ENCODE measurements at regions of chr1 and their contacts with region 1.

Region 1: DNA sequence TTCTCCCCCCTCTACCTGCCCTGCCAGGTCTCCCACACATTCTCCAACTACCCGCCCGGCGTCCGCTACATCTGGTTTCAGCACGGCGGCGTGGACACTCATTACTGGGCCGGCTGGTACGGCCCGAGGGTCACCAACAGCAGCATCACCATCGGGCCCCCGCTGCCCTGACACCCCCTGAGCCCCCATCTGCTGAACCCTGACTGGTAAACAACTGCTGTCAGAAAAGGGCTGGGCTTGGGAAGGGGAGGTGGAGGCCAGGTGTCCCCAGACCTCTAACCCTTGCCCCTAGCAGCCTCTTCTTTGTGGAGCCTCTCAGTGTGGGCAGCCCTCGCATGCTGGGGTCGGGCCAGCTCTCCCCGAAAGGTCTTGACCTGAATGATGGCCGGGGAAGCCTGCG is 2.9 kb upstream of the FBXO6 start:
- DNase-seq: no peak
- ATAC-seq: no peak
- H3K4me3 ChIP-seq: no peak overlapping the region
- H3K27ac ChIP-seq: no peak overlapping the region
- H3K4me1 ChIP-seq: peaks cover 7% of the 10 kb centered on the region
- H3K27me3 ChIP-seq: no peaks in the 10 kb centered on the region
- CTCF ChIP-seq: no peak

Region 2: DNA sequence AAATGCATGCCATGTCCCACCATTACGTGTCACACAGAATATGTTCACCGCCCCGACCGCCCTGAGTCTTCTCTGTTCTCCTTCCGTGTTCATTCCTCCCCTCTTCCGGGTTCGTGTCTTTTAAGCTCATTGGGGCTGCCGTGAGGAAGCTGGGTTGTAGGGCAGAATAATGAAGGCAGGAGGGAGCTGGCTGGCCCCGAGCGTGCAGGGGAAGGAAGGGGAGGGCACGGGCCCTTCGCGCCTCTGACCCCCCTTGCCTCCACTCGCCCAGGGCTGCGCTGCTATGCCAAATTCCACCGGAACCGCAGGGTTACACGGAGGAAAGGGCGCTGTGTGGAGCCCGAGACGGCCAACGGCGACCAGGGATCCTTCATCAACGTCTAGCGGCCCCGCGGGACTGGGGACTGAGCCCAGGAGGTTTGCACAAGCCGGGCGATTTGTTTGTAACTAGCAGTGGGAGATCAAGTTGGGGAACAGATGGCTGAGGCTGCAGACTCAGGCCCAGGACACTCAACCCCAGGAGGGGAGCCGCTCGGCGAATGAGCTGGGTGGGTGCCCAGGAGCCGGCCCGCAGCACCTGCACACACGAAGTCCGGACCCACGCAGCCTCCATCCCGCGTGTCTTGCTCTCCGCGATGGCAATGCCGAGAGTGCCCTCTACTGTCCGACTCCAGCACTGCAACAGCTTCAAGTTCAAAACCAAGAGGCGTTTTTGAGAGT is 58.4 kb after region 1 on chr1:
- intact Hi-C with region 1: loop called (anchors 10 kb)
- DNase-seq: peak; percentile 91
- ATAC-seq: peak; percentile 90 to 93
- H3K4me3 ChIP-seq: peak overlapping the region; percentile 57
- H3K27ac ChIP-seq: peak overlapping the region; percentile 85
- H3K4me1 ChIP-seq: peaks cover 21% of the 10 kb centered on the region
- H3K27me3 ChIP-seq: no peaks in the 10 kb centered on the region
- CTCF ChIP-seq: peak; percentile 98

Region 3: GRCh38 chr1:11749203-11749689 is 88.1 kb after region 1 on chr1:
- intact Hi-C with region 1: no loop called
- DNase-seq: peak; percentile 72
- ATAC-seq: peak; percentile 84 to 89
- H3K4me3 ChIP-seq: no peak overlapping the region
- H3K27ac ChIP-seq: no peak overlapping the region
- H3K4me1 ChIP-seq: peaks cover 5% of the 10 kb centered on the region
- H3K27me3 ChIP-seq: no peaks in the 10 kb centered on the region
- CTCF ChIP-seq: peak; percentile 64

Region 4: DNA sequence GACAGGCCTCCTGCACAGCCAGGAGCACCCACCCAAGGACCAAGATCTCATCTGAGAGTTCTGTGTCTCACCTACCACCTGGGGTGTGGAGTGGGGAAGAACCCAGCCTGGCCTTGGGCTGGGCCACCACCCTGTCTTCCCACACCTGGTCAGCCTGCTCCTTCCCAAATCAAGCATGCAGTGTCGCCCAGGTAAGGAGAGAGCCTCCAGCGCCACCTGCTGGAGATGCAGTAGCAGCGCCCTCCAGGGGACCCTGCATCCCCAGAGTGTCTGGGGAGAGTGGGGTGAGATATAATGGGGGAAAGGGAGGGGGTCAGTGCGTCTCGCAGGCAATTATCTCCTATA is 232.8 kb after region 1 on chr1:
- intact Hi-C with region 1: no loop called
- DNase-seq: peak; percentile 77
- ATAC-seq: peak; percentile 92 to 94
- H3K4me3 ChIP-seq: no peak overlapping the region
- H3K27ac ChIP-seq: no peak overlapping the region
- H3K4me1 ChIP-seq: no peaks in the 10 kb centered on the region
- H3K27me3 ChIP-seq: peaks cover 43% of the 10 kb centered on the region
- CTCF ChIP-seq: peak; percentile 90

Measured in lower lobe of right lung (tissue), 2 donors.